Psoas muscle (tissue), 8 donors: ENCODE measurements at regions of chr7 and their contacts with region 1.

Region 1: DNA sequence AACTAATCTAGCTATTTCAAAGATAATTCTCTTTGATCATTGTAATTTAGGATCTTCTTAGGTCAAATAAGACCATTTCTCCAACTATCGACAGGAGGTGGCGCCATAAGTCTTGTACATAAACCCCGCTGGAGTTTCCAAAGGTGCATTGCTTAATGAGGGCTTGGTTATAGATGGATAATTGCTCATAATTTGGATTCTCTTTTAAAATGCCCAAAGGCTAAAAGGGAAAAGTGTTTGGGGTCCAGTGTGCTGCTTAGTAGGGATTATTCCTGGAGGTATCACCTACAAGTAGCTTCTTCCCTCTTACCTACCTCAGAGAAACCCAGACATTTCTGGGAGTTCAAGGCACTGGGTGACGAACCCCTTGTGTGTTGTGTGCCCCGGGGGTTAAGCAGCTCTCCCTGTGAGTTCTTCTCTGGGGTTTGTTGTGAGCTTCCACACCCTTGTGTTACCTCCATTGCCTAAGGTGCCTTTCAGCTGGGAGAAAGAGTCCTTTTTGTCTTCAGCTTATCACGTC is 75.2 kb downstream of the PAXIP1 start:
- DNase-seq: peak in 1 of 2 donors; percentile 57
- ATAC-seq: peak; percentile 82 to 92 (median 86)
- H3K4me3 ChIP-seq: peak overlapping the region; percentile 90
- H3K27ac ChIP-seq: peak overlapping the region; percentile 84
- H3K4me1 ChIP-seq: no peaks in the 10 kb centered on the region
- H3K27me3 ChIP-seq: no peaks in the 10 kb centered on the region
- CTCF ChIP-seq: peak; percentile 73

Region 2: DNA sequence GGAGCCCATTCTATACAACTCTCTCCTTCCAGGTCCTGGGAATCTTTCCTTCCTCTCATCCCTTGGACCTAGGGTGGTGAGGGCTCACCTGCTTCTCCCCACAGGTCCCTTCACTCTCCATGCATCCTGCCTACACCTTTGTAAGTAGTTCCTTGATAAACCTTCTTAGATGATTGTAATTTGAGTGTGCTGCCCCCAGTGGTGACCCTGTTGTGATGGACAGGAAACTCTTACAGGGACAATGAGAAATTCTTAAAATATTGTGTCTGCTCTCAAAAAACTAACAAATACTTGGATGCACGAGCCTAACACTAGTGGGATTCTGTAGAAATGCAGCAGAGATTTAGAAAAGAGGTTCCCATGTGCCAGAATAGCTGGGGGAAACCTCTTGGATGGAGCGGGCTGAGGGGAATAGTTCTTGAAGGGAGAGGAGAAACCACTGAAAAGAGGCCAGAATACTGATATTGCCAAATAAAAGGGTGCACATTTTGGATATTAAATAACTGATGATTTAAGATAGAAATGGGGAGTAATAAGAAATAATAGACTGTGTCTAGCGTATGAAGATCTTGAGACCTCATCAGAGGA is 82.0 kb after region 1 on chr7:
- intact Hi-C with region 1: loop called in 1 of 2 experiments (anchors 5 kb)
- DNase-seq: no peak
- ATAC-seq: no peak
- H3K4me3 ChIP-seq: no peak overlapping the region
- H3K27ac ChIP-seq: no peak overlapping the region
- H3K4me1 ChIP-seq: peaks cover 2% of the 10 kb centered on the region
- H3K27me3 ChIP-seq: no peaks in the 10 kb centered on the region
- CTCF ChIP-seq: peak; percentile 16

Region 3: GRCh38 chr7:155344600-155345433 is 417.1 kb after region 1 on chr7:
- intact Hi-C with region 1: loop called (anchors 5 kb)
- DNase-seq: peak; percentile 75 to 86
- ATAC-seq: peak; percentile 95 to 99 (median 97)
- H3K4me3 ChIP-seq: peak overlapping the region; percentile 57
- H3K27ac ChIP-seq: no peak overlapping the region
- H3K4me1 ChIP-seq: peaks cover 3% of the 10 kb centered on the region
- H3K27me3 ChIP-seq: peaks cover 0 to 19% (median 6%) of the 10 kb centered on the region in 3 donors
- CTCF ChIP-seq: peak; percentile 95

Region 4: DNA sequence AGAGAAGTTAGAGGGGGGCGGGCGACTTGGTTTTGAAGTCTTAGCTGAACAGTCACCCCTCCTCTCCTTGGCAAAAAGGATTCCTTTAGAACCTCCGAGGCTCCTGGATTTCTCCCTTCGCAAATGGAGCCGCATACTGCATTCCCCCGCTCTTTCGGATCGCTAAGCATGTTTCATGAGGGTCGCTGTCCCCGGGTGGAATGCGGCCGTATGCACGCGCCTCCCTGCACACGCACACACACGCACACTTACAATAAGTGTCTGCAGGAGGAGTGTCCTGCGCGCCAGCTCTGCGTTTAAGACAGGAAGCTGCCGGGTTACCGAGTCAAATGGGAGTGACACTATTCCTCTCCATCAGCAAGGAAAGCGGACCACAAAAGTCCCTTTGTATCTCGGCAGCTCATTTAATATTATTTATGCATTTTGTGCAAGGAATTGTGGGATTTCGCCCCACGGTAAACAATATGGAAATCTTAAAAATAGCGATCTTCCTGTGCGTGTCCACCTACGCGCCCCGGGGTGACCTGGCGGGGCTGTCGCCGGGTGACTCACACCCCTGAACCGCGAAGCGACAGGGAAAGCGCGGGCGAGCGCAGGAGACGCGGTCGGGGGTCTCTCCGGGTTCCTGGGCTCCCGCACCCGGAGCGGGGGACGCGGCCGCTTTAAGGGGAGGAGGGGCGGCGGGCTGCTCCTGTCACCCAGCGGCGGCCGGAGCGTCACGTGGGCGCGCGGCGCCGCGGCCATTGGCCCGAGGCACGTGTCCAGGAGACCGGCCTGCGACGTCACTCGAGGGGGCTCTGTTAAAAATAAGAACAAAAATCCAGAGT is 529.3 kb after region 1 on chr7:
- intact Hi-C with region 1: loop called in 1 of 2 experiments (anchors 10 kb)
- DNase-seq: peak; percentile 79 to 81
- ATAC-seq: peak; percentile 87 to 95 (median 92)
- H3K4me3 ChIP-seq: peak overlapping the region; percentile 82
- H3K27ac ChIP-seq: no peak overlapping the region
- H3K4me1 ChIP-seq: peaks cover 12% of the 10 kb centered on the region
- H3K27me3 ChIP-seq: peaks cover 0 to 96% (median 68%) of the 10 kb centered on the region in 3 donors
- CTCF ChIP-seq: no peak